ENCODE measurements at regions of chr1 and their contacts with region 1.

Region 1: DNA sequence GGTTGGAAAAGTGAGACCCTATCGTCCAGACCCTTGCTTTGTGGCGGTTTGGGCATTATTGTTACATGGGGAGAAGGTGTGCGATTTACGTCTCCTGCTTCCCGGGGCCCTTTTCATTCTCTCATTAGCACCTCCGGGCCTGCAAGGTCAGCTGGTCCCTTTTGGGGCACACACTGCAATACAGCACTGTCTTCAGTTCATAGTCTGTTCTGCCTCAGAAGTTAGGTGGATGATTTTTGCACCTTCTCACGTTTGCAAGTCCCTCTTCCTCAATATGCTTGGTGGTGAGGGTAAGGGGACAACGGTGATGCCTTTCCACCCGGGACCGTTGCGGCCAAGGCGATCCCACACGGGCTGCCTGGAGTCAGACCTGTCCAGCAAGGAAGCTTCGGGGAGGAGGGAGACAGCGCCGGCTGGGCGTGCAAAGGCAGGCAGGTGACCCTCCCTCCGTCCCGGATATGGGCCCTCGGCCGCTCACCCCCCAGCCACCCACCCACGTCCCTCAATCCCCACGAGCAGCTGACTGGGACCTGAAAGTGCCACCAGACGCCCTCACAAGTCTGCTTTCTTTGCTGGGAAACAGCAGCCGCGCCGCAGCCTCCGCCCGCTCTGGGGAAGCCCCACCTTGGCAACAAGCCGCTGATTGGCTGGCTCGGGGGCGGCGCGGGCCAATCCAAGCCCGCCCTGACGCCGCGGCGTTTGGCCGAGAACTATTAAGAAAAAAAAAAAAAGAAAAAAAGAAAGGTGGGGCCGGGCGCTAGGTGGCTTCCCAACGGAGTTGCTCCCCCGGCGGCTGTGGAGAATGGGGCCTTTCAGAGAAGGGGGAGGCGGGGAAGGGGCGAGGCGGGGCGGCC is 21.7 kb downstream of the BTG2 start:
- DNase-seq: peak; percentile 94 to 98 (median 98)
- H3K4me3 ChIP-seq: peak overlapping the region in 5 of 7 experiments; percentile 35 to 63 (median 54)
- H3K27ac ChIP-seq: peak overlapping the region; percentile 75 to 88
- H3K4me1 ChIP-seq: peaks cover 32 to 70% (median 59%) of the 10 kb centered on the region in 4 experiments
- H3K27me3 ChIP-seq: no peaks in the 10 kb centered on the region

Region 2: DNA sequence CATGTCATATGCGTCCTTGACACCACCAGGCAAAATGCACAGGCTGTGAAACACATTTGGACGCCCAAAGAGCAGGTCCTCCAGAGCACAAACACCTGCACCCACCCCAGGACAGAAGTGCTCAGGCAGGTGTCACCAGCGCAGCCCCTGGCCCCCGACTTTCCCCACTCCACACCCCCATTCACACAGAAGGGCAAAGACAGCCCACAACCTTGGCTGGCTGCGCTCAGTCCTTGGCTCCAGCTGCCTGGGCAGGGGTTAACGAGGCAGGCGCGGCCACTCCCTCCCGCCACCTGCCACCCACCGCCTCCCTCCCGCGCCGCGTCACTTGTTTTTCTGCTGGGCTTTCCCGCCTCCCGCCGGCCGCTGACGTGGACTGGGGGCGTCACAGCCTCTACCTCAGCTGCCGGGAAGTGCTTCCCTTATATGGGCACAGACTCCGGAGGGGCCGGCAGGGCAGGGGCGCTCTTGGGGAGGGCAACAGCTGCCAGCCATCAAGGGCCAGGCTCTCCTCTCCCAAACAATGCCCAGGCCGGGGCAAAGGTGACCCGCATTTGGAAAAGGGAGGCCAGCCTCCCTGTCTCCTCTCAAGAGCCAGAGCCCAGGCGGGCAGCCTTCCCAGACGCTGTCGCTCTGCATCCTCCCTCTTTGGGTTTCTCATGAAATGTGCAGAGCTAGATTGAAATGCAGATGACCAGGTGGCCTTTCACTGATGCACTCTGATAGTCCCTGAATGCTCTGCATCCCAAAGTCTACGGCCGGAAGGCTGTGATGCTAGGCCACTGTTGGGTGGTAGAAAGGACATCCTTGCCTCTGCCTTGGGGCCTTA is 36.6 kb before region 1 on chr1:
- CTCF ChIA-PET with region 1: interaction called, 254 read pairs
- POLR2A ChIA-PET with region 1: interaction called, 17 read pairs
- DNase-seq: peak; percentile 85 to 95 (median 95)
- H3K4me3 ChIP-seq: peak overlapping the region in 3 of 7 experiments; percentile 54 to 58 (median 55)
- H3K27ac ChIP-seq: peak overlapping the region; percentile 81 to 85
- H3K4me1 ChIP-seq: peaks cover 25 to 64% (median 58%) of the 10 kb centered on the region in 4 experiments
- H3K27me3 ChIP-seq: no peaks in the 10 kb centered on the region

Region 3: GRCh38 chr1:203299169-203299568 is 27.9 kb before region 1 on chr1:
- CTCF ChIA-PET with region 1: interaction called, 254 read pairs
- POLR2A ChIA-PET with region 1: no interaction called
- DNase-seq: no peak
- H3K4me3 ChIP-seq: no peak overlapping the region
- H3K27ac ChIP-seq: no peak overlapping the region
- H3K4me1 ChIP-seq: peaks cover 20 to 58% (median 39%) of the 10 kb centered on the region in 4 experiments
- H3K27me3 ChIP-seq: no peaks in the 10 kb centered on the region

Region 4: GRCh38 chr1:203408486-203409427 is 81.7 kb after region 1 on chr1:
- CTCF ChIA-PET with region 1: no interaction called
- POLR2A ChIA-PET with region 1: no interaction called
- DNase-seq: no peak
- H3K4me3 ChIP-seq: no peak overlapping the region
- H3K27ac ChIP-seq: no peak overlapping the region
- H3K4me1 ChIP-seq: peaks cover 0 to 8% (median 2%) of the 10 kb centered on the region in 4 experiments
- H3K27me3 ChIP-seq: no peaks in the 10 kb centered on the region

Measured in common myeloid progenitor, CD34-positive (primary cell).